ENCODE measurements at regions of chr15 and their contacts with region 1.

Region 1: GRCh38 chr15:92808978-92809879 is 90.9 kb upstream of the CHD2 start:
- DNase-seq: peak; percentile 98 to 99
- H3K4me3 ChIP-seq: peak overlapping the region; percentile 59 to 73
- H3K27ac ChIP-seq: peak overlapping the region; percentile 98 to 99
- H3K4me1 ChIP-seq: peaks cover 6 to 72% (median 30%) of the 10 kb centered on the region in 4 donors
- H3K27me3 ChIP-seq: no peaks in the 10 kb centered on the region
- CTCF ChIP-seq: peak; percentile 94 to 99

Region 2: GRCh38 chr15:92881802-92882696 is 72.8 kb after region 1 on chr15:
- intact Hi-C with region 1: loop called (anchors 1 kb)
- DNase-seq: peak; percentile 99 to 100
- H3K4me3 ChIP-seq: peak overlapping the region; percentile 69 to 100
- H3K27ac ChIP-seq: peak overlapping the region; percentile 89 to 100
- H3K4me1 ChIP-seq: peaks cover 0 to 31% (median 7%) of the 10 kb centered on the region in 4 donors
- H3K27me3 ChIP-seq: no peaks in the 10 kb centered on the region
- CTCF ChIP-seq: peak in 1 of 2 experiments; percentile 8

Region 3: GRCh38 chr15:92903941-92904831 is 95.0 kb after region 1 on chr15:
- intact Hi-C with region 1: loop called (anchors 2 kb)
- DNase-seq: peak; percentile 97 to 100
- H3K4me3 ChIP-seq: peak overlapping the region; percentile 60 to 65
- H3K27ac ChIP-seq: peak overlapping the region; percentile 92 to 95
- H3K4me1 ChIP-seq: peaks cover 0 to 68% (median 30%) of the 10 kb centered on the region in 4 donors
- H3K27me3 ChIP-seq: no peaks in the 10 kb centered on the region
- CTCF ChIP-seq: peak in 1 of 2 experiments; percentile 25